Activated naive CD4-positive, alpha-beta T cell treated with anti-CD3 and anti-CD28 coated beads for 36 hours (primary cell): ENCODE measurements at regions of chr14 and their contacts with region 1.

Region 1: DNA sequence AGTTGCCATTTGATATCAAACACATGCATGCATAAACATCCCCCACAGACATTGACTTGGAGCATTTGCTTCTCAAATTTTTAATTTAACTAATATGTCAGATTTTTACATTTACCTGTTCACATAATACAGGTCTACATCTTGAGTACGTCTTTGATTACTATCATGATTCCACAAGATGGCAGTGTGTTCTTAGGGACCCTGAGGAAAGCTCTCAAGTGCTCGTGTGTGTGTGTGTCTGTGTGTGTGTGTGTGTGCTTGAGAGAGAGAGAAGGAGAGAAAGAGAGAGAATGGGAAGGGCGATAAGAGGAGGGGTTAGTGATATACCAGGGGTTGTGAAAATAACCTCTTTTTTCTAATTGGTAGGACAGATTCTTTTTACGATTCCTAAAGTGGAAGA is 167.1 kb upstream of the OR4E1 start:
- DNase-seq: no peak
- H3K4me3 Mint-ChIP-seq: peak overlapping the region; percentile 65
- H3K27ac Mint-ChIP-seq: peak overlapping the region; percentile 73
- H3K4me1 Mint-ChIP-seq: peaks cover 7% of the 10 kb centered on the region
- H3K27me3 Mint-ChIP-seq: peaks cover 4% of the 10 kb centered on the region

Region 2: DNA sequence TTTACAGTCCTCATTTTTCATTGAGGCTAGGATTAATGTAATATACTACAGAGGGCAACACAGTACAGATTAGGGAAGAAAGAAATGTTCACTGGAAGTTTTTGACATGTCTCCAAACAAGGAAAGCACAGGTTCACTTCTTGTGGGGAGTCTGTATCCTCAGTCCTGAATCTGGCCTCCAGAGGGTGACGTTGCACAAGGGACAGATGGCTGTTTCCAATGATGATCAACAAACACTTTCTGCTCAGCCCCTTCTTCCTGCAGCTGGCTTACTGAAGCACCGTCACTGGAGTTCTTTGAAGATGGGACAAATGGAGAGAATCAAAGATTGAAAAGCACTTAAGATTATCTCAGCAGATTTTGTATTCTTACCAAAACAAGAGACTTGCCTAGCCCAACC is 43.8 kb before region 1 on chr14:
- CTCF ChIA-PET with region 1: no interaction called
- intact Hi-C with region 1: loop called (anchors 5 kb)
- DNase-seq: peak; percentile 57
- H3K4me3 Mint-ChIP-seq: peak overlapping the region; percentile 66
- H3K27ac Mint-ChIP-seq: peak overlapping the region; percentile 83
- H3K4me1 Mint-ChIP-seq: peaks cover 14% of the 10 kb centered on the region
- H3K27me3 Mint-ChIP-seq: no peaks in the 10 kb centered on the region

Region 3: DNA sequence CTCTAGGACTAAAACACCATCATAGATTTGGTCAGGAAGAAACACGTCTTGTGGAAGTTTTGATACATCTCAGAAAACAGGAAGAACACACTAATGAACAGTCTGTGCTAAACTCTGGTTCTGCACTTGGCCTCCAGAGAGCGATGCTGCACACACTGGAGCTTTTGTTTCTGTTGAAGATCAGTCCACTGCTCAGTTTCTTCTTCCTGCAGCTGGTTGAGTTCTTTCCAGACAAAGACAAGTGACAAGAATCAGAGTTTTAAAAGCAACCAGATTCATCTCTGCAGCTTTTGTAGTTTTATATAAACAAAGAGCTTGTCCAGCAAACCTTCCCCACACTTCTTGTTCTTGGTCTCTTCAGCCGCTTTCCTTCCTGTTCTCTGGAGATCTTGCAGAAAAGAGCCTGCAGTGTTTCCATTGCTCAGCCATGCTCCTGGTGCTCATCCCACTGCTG is 61.9 kb after region 1 on chr14:
- CTCF ChIA-PET with region 1: no interaction called
- intact Hi-C with region 1: no loop called
- DNase-seq: peak; percentile 70
- H3K4me3 Mint-ChIP-seq: peak overlapping the region; percentile 64
- H3K27ac Mint-ChIP-seq: peak overlapping the region; percentile 71
- H3K4me1 Mint-ChIP-seq: peaks cover 7% of the 10 kb centered on the region
- H3K27me3 Mint-ChIP-seq: no peaks in the 10 kb centered on the region